Heart right ventricle (tissue), 16 donors: ENCODE measurements at regions of chr9 and their contacts with region 1.

Region 1: GRCh38 chr9:90102292-90102901 is 497.6 kb downstream of the GADD45G start:
- DNase-seq: peak; percentile 68 to 82
- ATAC-seq: peak; percentile 74 to 88 (median 84)
- H3K4me3 ChIP-seq: no peak overlapping the region
- H3K27ac ChIP-seq: no peak overlapping the region
- H3K4me1 ChIP-seq: peaks cover 2 to 32% (median 15%) of the 10 kb centered on the region in 9 donors
- H3K27me3 ChIP-seq: no peaks in the 10 kb centered on the region
- CTCF ChIP-seq: peak; percentile 43 to 89 (median 77)

Region 2: DNA sequence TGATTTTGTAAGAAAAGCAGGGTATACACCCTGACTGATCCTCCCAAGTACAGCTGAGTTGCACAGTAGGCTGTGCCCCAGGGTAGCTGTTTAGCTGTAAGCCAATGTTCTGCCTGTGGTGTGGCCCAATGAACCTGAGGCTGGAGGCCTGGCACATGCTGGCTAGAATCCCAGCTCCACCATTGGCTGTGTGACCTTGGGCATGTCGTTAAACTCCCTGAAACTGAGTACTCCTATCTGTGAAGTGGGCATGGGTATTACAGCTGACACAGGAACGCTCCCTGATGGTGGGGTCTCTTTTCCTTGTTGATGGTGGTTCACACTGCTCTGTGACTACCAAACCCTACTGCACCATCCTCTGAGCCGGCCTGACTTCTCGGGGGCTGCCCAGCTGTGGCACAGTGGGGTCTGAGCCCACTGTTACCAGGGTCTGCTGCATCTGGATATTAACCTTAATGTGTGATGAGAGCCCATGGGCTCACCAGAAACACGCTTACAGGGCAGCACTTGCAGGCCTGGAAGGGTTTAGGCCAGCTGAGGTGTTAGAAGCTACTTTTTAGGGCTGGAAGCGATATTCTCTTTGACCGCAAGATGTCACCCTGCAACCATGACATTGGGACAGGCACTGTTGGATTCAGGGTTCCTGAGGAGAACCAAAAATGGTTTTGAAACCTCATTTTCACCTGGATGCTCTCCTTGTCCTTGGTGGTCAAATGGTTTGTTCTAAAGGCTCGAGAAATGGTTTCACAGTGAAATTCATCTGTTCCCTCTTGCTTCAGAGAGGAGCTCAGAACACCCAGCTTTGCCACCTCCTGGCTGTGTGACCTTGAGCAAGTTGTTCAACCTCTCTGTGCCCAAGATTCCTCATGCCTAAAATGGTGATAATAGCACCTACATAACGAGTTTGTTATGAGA is 504.4 kb before region 1 on chr9:
- intact Hi-C with region 1: loop called (anchors 1 to 5 kb)
- DNase-seq: peak in 1 of 2 donors; percentile 61
- ATAC-seq: peak in 7 of 8 donors; percentile 40 to 67 (median 59)
- H3K4me3 ChIP-seq: no peak overlapping the region
- H3K27ac ChIP-seq: no peak overlapping the region
- H3K4me1 ChIP-seq: peaks cover 0 to 3% (median 2%) of the 10 kb centered on the region in 9 donors
- H3K27me3 ChIP-seq: peaks cover 0 to 4% (median 0%) of the 10 kb centered on the region in 7 donors
- CTCF ChIP-seq: peak; percentile 59 to 89 (median 83)

Region 3: DNA sequence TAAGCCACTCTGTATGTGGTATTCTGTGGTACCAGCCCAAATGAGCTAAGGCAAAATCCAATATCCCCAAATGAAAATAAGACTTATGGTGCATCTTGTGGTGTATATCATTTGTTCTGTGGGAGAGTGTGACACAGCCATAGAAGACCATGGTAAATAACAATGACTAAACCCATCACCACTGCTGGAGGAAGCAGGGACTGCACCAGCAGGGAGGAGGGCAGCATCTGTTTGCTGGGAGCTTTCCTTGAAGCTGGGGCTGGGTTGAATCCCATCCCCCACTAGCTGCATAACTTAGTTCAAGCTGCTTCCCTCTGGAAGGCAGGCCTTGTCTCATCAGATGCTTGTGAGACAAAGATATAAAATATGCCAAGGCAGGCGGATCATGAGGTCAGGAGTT is 483.4 kb before region 1 on chr9:
- intact Hi-C with region 1: no loop called
- DNase-seq: no peak
- ATAC-seq: no peak
- H3K4me3 ChIP-seq: no peak overlapping the region
- H3K27ac ChIP-seq: no peak overlapping the region
- H3K4me1 ChIP-seq: peaks cover 8 to 30% (median 23%) of the 10 kb centered on the region in 9 donors
- H3K27me3 ChIP-seq: no peaks in the 10 kb centered on the region
- CTCF ChIP-seq: no peak

Region 4: DNA sequence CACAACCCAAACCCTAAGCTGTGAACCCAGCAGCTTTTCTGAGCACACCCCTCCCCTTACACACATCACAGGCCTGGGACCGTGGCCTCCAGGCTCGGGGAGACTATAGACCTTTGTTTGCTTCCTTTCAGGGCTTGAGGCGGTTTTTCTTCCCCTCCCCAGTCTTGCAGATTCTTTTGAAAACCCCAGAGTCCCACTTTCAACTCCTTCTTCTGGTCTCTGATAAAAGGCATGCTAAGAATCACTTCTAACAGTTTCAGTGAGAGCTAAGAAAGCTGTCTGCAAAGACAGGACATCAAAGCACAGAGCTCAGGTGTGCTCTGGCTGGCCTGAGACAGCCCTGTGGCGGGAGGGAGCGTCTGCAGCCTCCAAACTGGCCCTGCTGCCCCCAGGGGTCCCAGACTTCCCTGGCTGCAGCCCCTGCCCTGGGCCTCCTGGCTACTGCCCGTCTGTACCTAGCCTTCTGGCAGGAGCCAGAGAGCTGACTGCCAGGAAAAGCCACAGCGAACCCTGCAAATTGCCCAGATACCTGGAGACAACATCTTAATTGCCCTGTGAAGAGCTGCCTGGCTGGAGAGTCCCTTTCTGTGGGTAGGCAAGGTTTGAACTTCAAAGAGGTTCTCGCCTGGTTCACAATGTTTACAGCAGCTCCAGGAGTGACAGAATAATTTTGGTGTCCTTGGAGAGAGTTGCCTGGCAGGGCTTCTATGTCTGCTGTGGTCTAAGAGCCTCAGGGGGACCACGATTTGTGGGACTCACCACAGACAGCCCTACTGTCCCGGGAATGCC is 358.6 kb before region 1 on chr9:
- intact Hi-C with region 1: loop called in 1 of 10 experiments (anchors 10 kb)
- DNase-seq: no peak
- ATAC-seq: no peak
- H3K4me3 ChIP-seq: no peak overlapping the region
- H3K27ac ChIP-seq: peak overlapping the region in 1 of 10 donors; percentile 44
- H3K4me1 ChIP-seq: peaks cover 0 to 26% (median 20%) of the 10 kb centered on the region in 9 donors
- H3K27me3 ChIP-seq: no peaks in the 10 kb centered on the region
- CTCF ChIP-seq: no peak

Region 5: DNA sequence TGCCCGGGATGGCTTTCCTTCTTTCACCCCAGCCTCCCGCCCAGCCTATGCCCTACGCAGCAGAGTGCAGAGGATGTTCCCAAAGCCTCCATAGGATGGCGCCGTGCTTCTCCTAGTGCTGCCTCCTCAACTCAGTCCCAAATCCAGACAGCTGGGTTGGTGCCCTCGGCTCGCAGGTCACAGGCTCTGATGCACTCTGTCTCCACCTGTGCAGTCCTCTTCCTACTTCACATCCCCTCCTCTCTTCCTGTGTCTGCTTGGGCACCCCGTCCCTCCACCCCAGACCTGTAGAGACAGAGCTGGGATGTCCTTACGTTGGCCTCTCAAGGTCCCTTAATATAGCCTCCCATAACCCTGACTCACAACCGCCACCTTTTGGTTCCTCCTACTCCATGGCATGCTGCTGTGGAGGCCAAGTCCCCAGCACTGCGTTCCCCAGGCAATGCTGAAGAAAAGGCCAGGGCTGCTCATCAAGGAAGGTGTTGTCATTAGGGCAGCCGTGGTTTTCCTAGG is 183.2 kb before region 1 on chr9:
- intact Hi-C with region 1: loop called in 5 of 10 experiments (anchors 5 to 10 kb)
- DNase-seq: peak; percentile 33 to 56
- ATAC-seq: peak; percentile 86 to 95 (median 94)
- H3K4me3 ChIP-seq: no peak overlapping the region
- H3K27ac ChIP-seq: no peak overlapping the region
- H3K4me1 ChIP-seq: peaks cover 0 to 22% (median 0%) of the 10 kb centered on the region in 9 donors
- H3K27me3 ChIP-seq: peaks cover 0 to under 1% (median 0%) of the 10 kb centered on the region in 7 donors
- CTCF ChIP-seq: peak; percentile 4 to 71 (median 52)

Region 6: GRCh38 chr9:89999534-90000370 is 102.6 kb before region 1 on chr9:
- intact Hi-C with region 1: loop called in 7 of 10 experiments (anchors 5 to 10 kb)
- DNase-seq: peak; percentile 76 to 81
- ATAC-seq: peak; percentile 82 to 95 (median 92)
- H3K4me3 ChIP-seq: peak overlapping the region in 9 of 10 donors; percentile 10 to 34 (median 17)
- H3K27ac ChIP-seq: peak overlapping the region; percentile 71 to 91 (median 88)
- H3K4me1 ChIP-seq: peaks cover 23 to 64% (median 50%) of the 10 kb centered on the region in 9 donors
- H3K27me3 ChIP-seq: no peaks in the 10 kb centered on the region
- CTCF ChIP-seq: peak in 2 of 9 donors; percentile 35 to 37

Region 7: DNA sequence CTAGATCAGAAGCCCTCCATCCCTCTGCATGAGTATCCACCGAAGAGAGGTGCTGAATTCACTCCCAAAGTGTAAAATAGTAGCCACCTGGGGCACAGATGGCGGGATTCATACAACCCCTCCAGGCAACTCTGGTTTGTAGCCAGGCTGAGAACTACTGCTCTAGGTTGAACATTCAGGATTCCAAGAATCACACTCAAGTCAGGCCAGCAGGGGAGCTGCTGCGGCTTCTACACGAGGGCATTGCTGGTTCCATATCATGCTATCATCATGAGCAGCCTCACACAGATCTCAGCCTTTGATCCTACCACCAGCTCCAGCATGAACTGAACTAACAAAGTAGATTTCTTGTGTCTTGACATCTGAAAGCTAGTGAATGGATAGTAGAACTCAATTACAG is 172.3 kb after region 1 on chr9:
- intact Hi-C with region 1: no loop called
- DNase-seq: no peak
- ATAC-seq: no peak
- H3K4me3 ChIP-seq: no peak overlapping the region
- H3K27ac ChIP-seq: no peak overlapping the region
- H3K4me1 ChIP-seq: no peaks in the 10 kb centered on the region
- H3K27me3 ChIP-seq: peaks cover 0 to 11% (median 5%) of the 10 kb centered on the region in 7 donors
- CTCF ChIP-seq: no peak